Heart left ventricle (tissue), 16 donors: ENCODE measurements at regions of chr22 and their contacts with region 1.

Region 1: DNA sequence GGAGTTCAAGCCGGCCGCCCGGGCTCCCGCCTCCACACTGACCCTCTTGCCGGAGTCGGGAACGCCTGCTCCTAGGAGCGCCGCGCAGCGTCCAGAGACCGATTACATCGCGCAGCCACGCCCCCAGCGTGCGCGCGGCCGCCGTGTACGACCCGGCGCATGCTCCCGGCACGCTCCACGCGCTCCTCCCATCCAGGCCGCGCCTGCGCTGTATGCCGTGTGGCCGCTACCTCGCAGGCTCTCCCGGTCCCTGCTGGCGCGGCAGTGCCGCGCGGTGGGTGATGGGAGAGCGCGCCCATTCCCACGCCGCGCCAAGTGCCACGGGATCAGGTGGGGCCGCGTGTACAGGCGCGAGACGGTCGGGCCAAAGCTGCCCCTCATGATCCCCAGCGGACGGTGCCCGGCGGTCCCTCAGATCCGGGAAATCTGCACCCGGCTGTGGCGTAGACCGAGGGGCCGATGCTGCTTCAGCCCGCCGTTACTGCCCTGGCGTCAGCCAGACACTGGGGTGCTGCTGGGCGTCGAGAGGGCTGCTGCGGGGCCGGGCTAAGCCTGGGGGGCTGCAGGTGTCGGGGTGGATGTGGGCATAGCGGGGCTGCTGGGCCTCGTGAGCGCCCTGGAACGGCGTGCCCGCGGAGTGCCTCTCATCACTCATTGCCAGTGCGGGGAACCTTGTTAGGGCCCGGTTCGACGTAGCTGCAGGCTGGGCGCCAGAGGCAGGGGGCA is at the starts of genes GNB1L and RTL10:
- DNase-seq: peak; percentile 97 to 99 (median 98)
- ATAC-seq: peak; percentile 99
- H3K4me3 ChIP-seq: peak within 1 kb of the TSS; percentile 63 to 97 (median 80)
- H3K27ac ChIP-seq: peak within 1 kb of the TSS; percentile 83 to 96 (median 93)
- H3K4me1 ChIP-seq: peaks cover 0 to 32% (median 24%) of the 10 kb centered on the region in 12 donors
- H3K27me3 ChIP-seq: no peaks in the 10 kb centered on the region
- CTCF ChIP-seq: peak in 5 of 12 donors; percentile 4 to 42 (median 19)
- POLR2A ChIP-seq: peak in 1 of 2 donors; percentile 97
- total RNA-seq, gene GNB1L: 1.9 to 3.7 (median 2.4) TPM
- total RNA-seq, gene RTL10: 5.1 to 11.6 (median 7.7) TPM

Region 2: DNA sequence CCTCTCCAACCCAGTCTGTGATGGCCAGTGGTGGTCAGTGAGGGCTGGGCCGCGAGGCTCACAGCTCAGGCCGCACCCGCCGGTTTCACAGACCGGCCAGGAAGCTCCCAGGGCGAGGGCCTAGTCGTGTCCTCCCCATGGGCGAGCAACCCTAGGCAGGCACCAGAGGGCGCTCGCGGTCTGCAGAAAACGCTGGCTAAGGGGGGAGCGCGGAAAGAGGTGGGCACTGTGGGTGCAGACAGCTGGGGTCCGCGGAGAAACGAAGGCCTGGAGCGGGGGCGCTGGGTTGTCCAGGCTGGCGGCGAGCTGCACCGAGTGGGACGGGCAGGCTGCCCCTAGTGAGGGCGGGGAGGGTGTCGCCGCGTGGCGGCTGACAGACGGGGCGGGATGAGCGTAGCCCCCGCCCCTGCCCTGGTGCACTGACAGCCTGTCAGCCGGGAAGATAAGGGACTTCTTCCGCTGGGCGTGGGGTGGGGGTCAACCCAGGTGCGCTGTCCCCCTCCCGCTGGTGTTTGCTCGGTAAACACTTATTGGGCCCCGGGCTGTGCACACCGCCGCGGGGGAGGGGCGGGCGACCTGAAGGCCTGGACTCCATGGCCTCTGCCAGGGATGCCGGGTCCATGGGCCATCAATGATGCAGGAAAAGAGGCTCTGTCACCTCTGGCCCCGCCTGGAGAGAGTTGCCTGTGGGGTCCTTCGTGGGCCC is 124.1 kb before region 1 on chr22:
- intact Hi-C with region 1: no loop called
- DNase-seq: peak; percentile 82 to 93 (median 84)
- ATAC-seq: peak; percentile 80 to 91 (median 85)
- H3K4me3 ChIP-seq: peak overlapping the region in 10 of 12 donors; percentile 10 to 50 (median 42)
- H3K27ac ChIP-seq: no peak overlapping the region
- H3K4me1 ChIP-seq: peaks cover 0 to 10% (median 8%) of the 10 kb centered on the region in 12 donors
- H3K27me3 ChIP-seq: no peaks in the 10 kb centered on the region
- CTCF ChIP-seq: peak; percentile 87 to 99 (median 94)
- POLR2A ChIP-seq: no peak

Region 3: DNA sequence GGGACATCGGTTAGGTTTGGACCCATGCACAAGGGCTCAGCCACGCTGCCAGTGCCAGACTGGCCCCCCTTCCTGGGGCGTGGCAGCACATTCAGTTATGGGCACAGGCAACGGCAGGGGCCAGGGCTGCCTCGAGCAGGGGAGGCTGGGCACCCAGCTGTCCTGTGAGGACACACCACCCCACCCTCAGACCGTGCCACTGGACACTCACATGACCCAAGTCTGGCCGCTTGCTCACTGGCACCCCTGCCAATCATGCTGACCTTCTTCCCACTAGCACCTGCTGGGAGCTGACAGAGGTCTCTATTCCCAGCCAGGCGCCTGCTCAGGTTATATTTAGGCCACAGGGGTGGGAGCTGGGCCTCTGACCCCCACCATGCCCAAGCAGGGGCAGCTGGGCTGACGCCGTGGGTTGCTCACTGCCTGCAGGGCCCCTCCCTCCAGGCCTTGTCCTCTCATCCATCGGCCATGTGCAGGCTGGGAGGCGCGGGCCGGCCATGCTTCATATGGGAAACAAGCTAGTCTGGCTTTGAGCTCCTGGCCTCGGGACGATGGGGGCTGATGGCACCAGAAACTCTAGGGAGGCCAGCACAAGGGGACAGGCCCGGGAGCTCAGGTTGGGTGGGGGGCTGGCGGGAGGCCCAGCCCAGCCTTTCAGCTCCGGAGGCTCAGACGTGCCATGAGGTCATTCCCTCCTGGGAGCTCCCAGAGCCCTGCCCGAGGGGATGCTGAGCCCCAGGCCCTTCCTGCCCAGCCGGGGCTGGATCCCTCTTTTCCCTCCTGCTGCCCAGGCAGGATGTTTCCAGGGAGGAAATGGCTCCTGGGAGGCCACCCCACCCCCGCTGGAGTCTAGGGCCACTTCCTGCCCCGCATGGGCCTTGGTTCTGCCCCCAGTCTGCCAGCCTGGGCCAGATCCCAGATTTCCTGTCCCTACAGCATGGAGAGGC is 109.5 kb before region 1 on chr22:
- intact Hi-C with region 1: loop called in 1 of 10 experiments (anchors 5 kb)
- DNase-seq: peak; percentile 75 to 92 (median 78)
- ATAC-seq: peak; percentile 87 to 95 (median 92)
- H3K4me3 ChIP-seq: no peak overlapping the region
- H3K27ac ChIP-seq: peak overlapping the region in 9 of 12 donors; percentile 6 to 80 (median 46)
- H3K4me1 ChIP-seq: peaks cover 0 to 23% (median 11%) of the 10 kb centered on the region in 12 donors
- H3K27me3 ChIP-seq: peaks cover 0 to 6% (median 0%) of the 10 kb centered on the region in 9 donors
- CTCF ChIP-seq: no peak
- POLR2A ChIP-seq: no peak

Region 4: DNA sequence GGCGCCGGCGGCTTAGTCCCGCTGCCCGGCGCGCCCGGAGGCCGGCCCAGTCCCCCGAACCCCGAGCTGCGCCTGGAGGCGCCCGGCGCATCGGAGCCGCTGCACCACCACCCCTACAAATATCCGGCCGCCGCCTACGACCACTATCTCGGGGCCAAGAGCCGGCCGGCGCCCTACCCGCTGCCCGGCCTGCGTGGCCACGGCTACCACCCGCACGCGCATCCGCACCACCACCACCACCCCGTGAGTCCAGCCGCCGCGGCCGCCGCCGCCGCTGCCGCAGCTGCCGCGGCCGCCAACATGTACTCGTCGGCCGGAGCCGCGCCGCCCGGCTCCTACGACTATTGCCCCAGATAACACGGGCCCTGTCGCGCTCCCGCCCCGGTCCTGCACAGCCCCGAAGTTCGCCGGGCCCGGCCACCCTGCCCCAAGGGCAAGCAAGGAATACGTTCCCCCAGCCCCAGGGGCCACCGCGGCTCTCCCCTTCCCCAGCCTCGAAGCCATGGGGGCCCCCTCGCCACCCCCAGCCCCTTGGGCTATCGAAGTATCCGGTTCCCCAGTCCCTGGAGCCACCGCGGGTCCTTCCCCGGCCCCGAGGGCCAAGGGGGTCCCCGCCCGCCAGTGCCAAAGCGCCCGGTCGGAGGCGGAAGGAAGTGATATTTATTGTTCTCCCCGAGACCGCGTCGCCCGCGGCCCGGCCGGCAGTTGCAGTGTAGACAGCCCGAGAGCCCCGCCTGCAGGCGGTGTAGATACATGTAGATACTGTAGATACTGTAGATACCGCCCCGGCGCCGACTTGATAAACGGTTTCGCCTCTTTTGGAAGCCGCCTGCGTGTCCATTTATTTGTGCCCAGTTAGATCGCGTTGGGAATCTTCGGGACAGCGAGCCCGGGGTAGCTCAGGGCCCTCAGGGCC is 88.2 kb before region 1 on chr22:
- intact Hi-C with region 1: loop called in 2 of 10 experiments (anchors 5 kb)
- DNase-seq: peak in 2 of 5 donors; percentile 70 to 81
- ATAC-seq: peak in 3 of 4 donors; percentile 38 to 59 (median 48)
- H3K4me3 ChIP-seq: peak overlapping the region in 11 of 12 donors; percentile 22 to 57 (median 40)
- H3K27ac ChIP-seq: peak overlapping the region in 1 of 12 donors; percentile 32
- H3K4me1 ChIP-seq: peaks cover 0 to 32% (median 17%) of the 10 kb centered on the region in 12 donors
- H3K27me3 ChIP-seq: peaks cover 64 to 98% (median 88%) of the 10 kb centered on the region in 9 donors
- CTCF ChIP-seq: peak in 4 of 12 donors; percentile 20 to 25 (median 24)
- POLR2A ChIP-seq: no peak

Region 5: DNA sequence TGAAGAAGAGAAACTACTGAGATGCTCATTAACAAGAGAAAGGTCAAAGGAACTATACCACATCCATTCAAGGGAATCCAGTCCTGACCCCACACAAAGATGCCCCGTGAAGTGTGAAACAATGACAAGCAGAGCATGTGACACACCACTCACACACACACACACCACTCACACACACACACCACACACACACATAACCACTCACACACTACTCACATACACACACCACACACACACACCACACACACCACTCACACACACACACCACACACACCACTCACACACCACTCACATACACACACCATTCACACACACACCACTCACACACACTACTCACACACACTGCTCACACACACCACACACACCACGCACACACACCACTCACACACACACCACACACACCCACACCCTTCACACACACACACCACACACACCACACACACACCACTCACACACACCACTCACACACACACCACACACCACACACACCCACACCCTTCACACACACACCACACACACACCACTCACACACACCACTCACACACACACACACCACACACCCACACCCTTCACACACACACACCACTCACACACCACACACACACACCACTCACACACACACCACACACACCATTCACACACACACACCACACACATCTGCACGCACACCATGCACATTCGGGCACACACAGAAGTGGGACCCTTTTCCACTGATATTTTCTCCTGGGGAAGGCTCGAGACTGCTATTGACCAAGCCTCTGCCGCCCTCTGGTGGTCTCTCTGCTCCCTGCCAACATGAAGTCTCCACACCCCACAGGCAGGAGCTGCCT is 54.6 kb after region 1 on chr22:
- intact Hi-C with region 1: loop called in 1 of 10 experiments (anchors 10 kb)
- DNase-seq: peak; percentile 76 to 88 (median 82)
- ATAC-seq: peak; percentile 89 to 93 (median 92)
- H3K4me3 ChIP-seq: no peak overlapping the region
- H3K27ac ChIP-seq: no peak overlapping the region
- H3K4me1 ChIP-seq: no peaks in the 10 kb centered on the region
- H3K27me3 ChIP-seq: no peaks in the 10 kb centered on the region
- CTCF ChIP-seq: peak; percentile 77 to 94 (median 82)
- POLR2A ChIP-seq: no peak

Region 6: GRCh38 chr22:20102203-20102780 is 247.4 kb after region 1 on chr22:
- intact Hi-C with region 1: no loop called
- DNase-seq: peak in 2 of 5 donors; percentile 4 to 25
- ATAC-seq: no peak
- H3K4me3 ChIP-seq: no peak overlapping the region
- H3K27ac ChIP-seq: no peak overlapping the region
- H3K4me1 ChIP-seq: no peaks in the 10 kb centered on the region
- H3K27me3 ChIP-seq: no peaks in the 10 kb centered on the region
- CTCF ChIP-seq: no peak
- POLR2A ChIP-seq: no peak